IMR-90 (cell line): ENCODE measurements at regions of chr6 and their contacts with region 1.

Region 1: GRCh38 chr6:44268095-44268628 is 2.1 kb upstream of the TMEM151B start:
- DNase-seq: peak; percentile 46
- ATAC-seq: no peak
- H3K4me3 ChIP-seq: no peak overlapping the region
- H3K27ac ChIP-seq: no peak overlapping the region
- H3K4me1 ChIP-seq: peaks cover 13% of the 10 kb centered on the region
- H3K27me3 ChIP-seq: peaks cover 46% of the 10 kb centered on the region
- CTCF ChIP-seq: peak; percentile 90
- POLR2A ChIP-seq: no peak
- RAD21 ChIP-seq: peak; percentile 89

Region 2: DNA sequence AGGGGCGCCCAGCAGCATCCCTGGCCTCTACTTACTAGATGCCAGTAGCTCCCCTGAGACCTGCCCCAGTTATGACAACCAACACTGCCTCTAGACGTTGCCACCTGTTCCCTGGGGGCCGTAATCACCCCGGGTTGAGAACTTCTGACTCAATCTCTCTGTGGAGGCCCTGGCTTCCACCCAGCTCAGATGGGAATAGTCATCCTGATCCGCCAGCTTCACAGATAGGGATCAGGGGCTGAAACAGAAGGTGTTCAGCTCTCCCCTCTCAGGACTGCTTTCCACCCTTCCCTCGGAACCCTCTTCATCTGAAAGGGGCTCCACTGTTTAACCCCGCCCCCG is 106.2 kb before region 1 on chr6:
- CTCF ChIA-PET with region 1: no interaction called
- POLR2A ChIA-PET with region 1: interaction called, 13 read pairs
- dilution Hi-C with region 1: no loop called
- in situ Hi-C with region 1: no loop called
- intact Hi-C with region 1: no loop called
- DNase-seq: peak; percentile 67
- ATAC-seq: peak; percentile 38
- H3K4me3 ChIP-seq: no peak overlapping the region
- H3K27ac ChIP-seq: no peak overlapping the region
- H3K4me1 ChIP-seq: no peaks in the 10 kb centered on the region
- H3K27me3 ChIP-seq: peaks cover 26% of the 10 kb centered on the region
- CTCF ChIP-seq: no peak
- POLR2A ChIP-seq: no peak
- RAD21 ChIP-seq: no peak

Region 3: DNA sequence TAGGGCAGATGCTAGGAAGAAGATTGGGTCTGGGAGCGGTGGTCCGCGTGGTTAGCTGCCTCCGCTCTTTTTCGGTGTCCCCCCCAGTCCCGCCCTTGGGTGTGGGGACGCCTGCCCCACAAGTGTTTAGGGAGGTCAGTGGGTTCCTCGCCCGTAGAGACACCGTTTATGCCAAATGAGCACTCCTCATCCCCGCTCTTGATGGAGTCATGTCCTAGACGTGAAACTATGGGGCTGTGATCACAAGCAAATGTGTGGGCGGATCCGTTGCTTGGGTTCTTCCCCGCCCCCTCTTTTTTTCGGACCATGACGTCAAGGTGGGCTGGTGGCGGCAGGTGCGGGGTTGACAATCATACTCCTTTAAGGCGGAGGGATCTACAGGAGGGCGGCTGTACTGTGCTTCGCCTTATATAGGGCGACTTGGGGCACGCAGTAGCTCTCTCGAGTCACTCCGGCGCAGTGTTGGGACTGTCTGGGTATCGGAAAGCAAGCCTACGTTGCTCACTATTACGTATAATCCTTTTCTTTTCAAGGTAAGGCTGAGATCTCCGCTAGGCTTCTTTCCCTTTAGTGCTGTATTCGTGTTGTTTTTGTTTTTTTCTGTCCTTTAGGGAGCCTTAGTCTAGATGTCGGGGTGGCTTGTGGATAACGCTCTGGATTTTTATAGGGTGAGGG is 21.4 kb before region 1 on chr6 and contains the start of gene HSP90AB1:
- CTCF ChIA-PET with region 1: no interaction called
- POLR2A ChIA-PET with region 1: interaction called, 10 read pairs
- dilution Hi-C with region 1: no loop called
- in situ Hi-C with region 1: no loop called
- intact Hi-C with region 1: no loop called
- DNase-seq: peak; percentile 98
- ATAC-seq: peak; percentile 75
- H3K4me3 ChIP-seq: peak within 1 kb of the TSS; percentile 85
- H3K27ac ChIP-seq: peak within 1 kb of the TSS; percentile 83
- H3K4me1 ChIP-seq: peaks cover 5% of the 10 kb centered on the region
- H3K27me3 ChIP-seq: no peaks in the 10 kb centered on the region
- CTCF ChIP-seq: no peak
- POLR2A ChIP-seq: peak; percentile 100
- RAD21 ChIP-seq: no peak
- total RNA-seq, gene HSP90AB1: 1,307 and 1,440 TPM in 2 replicates

Region 4: DNA sequence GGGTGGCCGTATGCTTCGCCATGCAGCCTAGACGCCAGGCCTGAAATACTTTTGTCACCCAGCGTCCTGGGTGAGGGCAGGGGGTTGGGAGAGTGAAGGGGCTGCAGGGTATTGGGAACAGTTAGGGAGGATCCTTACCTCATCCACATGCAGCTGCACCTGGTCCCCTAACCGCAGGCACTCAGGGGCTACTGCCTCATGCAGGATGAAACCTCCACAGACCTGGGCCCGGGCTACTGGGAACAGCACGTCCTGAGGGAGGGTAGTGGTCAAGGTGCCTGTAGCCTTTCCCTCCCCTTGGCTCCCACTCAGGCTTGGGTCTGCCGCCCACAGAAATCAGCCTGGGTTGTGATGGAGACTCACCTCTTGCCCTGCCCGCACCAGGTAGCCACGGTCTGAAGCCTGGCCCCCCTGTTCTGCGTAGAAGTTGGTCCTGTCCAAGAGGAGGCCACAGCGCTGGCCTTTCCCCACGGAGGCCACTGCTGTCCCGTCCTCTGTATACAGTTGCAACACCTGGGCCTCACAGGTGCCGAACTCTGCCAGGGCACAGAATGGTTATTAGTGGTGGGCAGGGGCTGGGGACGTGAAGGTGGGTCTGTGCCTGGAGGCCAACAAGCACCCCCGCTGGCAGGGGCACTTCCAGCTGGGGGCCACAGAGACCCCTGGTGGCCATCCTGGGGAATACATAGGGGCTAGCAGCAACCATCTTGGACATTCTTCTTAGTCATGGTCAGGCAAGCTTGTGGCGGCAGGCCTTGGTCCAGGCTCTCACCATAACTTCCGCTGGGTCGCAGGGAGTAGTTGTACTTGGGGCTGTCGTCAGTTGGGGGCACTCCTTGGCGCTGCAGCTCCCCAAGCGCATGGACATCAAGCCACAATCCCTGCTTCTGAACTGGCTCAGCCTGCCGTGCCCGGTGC is 36.4 kb after region 1 on chr6:
- CTCF ChIA-PET with region 1: interaction called, 3 read pairs
- POLR2A ChIA-PET with region 1: no interaction called
- dilution Hi-C with region 1: no loop called
- in situ Hi-C with region 1: no loop called
- intact Hi-C with region 1: loop called (anchors 1 kb)
- DNase-seq: peak; percentile 35
- ATAC-seq: peak; percentile 75
- H3K4me3 ChIP-seq: no peak overlapping the region
- H3K27ac ChIP-seq: no peak overlapping the region
- H3K4me1 ChIP-seq: peaks cover 2% of the 10 kb centered on the region
- H3K27me3 ChIP-seq: no peaks in the 10 kb centered on the region
- CTCF ChIP-seq: peak; percentile 60
- POLR2A ChIP-seq: no peak
- RAD21 ChIP-seq: peak; percentile 52